Activated CD4-positive, alpha-beta memory T cell treated with anti-CD3 and anti-CD28 coated beads for 36 hours (primary cell): ENCODE measurements at regions of chr13 and their contacts with region 1.

Region 1: DNA sequence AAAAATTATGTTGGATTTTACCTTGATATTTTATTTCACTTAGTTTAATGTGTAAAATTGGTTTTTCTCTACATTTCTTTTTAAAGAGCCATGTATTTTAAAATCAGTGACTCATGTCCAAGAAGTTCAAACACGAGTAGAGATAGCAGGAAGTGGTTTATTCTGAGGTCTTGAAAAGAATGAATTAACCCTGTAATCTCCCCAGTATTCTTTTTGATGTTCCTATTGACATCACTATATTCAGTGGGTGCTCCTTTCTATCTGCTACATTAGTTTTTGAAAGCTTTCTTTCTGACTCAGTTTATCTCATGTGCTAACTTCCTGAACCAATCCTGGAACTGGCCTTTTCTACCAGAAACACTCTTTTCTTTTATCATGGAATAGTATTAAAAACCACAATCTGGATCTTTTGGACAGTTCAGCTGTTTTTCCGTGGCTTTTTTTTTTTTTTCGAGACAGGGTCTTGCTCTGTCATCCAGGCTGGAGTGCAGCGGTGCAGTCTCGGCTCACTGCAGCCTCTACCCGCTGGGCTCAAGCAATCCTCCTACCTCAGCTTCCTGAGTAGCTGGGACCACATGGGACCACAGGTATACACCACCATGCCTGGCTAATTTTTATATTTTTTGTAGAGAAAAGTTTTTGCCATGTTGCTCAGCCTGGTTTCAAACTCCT is 114.9 kb downstream of the PCCA start:
- DNase-seq: peak; percentile 14
- H3K4me3 Mint-ChIP-seq: no peak overlapping the region
- H3K27ac Mint-ChIP-seq: peak overlapping the region; percentile 45
- H3K4me1 Mint-ChIP-seq: peaks cover 15% of the 10 kb centered on the region
- H3K27me3 Mint-ChIP-seq: no peaks in the 10 kb centered on the region

Region 2: GRCh38 chr13:100138859-100139491 is 64.9 kb before region 1 on chr13:
- CTCF ChIA-PET with region 1: no interaction called
- POLR2A ChIA-PET with region 1: no interaction called
- intact Hi-C with region 1: loop called (anchors 2 kb)
- DNase-seq: no peak
- H3K4me3 Mint-ChIP-seq: no peak overlapping the region
- H3K27ac Mint-ChIP-seq: no peak overlapping the region
- H3K4me1 Mint-ChIP-seq: peaks cover 6% of the 10 kb centered on the region
- H3K27me3 Mint-ChIP-seq: no peaks in the 10 kb centered on the region